Common myeloid progenitor, CD34-positive (primary cell): ENCODE measurements at regions of chr11 and their contacts with region 1.

Region 1: GRCh38 chr11:45771566-45772448 is 33.1 kb upstream of the SLC35C1 start:
- DNase-seq: peak; percentile 74 to 77 (median 75)
- H3K4me3 ChIP-seq: peak overlapping the region; percentile 30 to 86 (median 71)
- H3K27ac ChIP-seq: peak overlapping the region in 1 of 2 experiments; percentile 38
- H3K4me1 ChIP-seq: peaks cover 0 to 11% (median 10%) of the 10 kb centered on the region in 4 experiments
- H3K27me3 ChIP-seq: peaks cover 0 to 26% (median 7%) of the 10 kb centered on the region in 5 experiments

Region 2: DNA sequence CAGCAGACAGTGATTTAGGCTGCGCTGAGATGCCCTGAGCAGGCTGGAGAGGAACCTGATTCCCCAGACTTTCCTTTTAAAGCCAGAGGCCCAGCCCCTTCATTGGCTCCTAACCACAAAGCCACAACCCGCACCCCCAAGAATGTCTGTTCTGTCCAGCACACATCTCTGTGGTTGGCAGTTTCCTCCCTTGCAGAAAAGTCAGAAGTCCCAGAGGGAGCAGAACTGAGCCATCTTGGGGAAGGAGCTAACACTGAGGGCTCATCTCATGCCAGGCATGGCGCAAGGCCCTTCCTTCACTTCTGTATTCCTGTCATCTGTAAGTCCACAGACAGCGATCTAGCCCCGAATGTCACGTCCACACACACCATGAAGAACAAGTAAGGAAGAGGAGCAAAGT is 388.6 kb before region 1 on chr11:
- CTCF ChIA-PET with region 1: interaction called, 12 read pairs
- POLR2A ChIA-PET with region 1: no interaction called
- DNase-seq: peak; percentile 71 to 85 (median 79)
- H3K4me3 ChIP-seq: peak overlapping the region in 2 of 7 experiments; percentile 23 to 37
- H3K27ac ChIP-seq: no peak overlapping the region
- H3K4me1 ChIP-seq: peaks cover 6 to 23% (median 17%) of the 10 kb centered on the region in 4 experiments
- H3K27me3 ChIP-seq: peaks cover 0 to 71% (median 31%) of the 10 kb centered on the region in 5 experiments

Region 3: GRCh38 chr11:45655347-45655756 is 116.5 kb before region 1 on chr11:
- CTCF ChIA-PET with region 1: interaction called, 21 read pairs
- POLR2A ChIA-PET with region 1: no interaction called
- DNase-seq: peak; percentile 53 to 68 (median 62)
- H3K4me3 ChIP-seq: no peak overlapping the region
- H3K27ac ChIP-seq: no peak overlapping the region
- H3K4me1 ChIP-seq: peaks cover 0 to 17% (median 8%) of the 10 kb centered on the region in 4 experiments
- H3K27me3 ChIP-seq: peaks cover 0 to 57% (median 25%) of the 10 kb centered on the region in 5 experiments

Region 4: DNA sequence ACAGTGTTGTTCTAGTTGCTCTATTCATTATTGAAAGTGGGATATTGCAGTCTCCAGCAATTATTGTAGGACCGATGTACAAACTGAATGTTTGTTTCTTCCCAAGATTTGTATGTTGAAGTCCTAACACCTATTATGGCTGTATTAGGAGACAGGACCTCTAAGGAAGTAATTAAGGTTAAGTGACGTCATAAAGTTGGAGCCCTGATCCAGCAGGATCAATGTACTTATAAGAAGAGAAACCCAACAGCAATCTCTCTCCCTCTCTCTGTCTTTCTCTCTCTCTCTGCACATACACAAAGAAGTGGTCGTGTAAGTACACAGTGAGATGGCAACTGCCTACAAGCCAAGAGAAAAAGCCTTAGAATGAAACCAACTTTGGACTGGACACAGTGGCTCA is 17.1 kb after region 1 on chr11:
- CTCF ChIA-PET with region 1: no interaction called
- POLR2A ChIA-PET with region 1: no interaction called
- DNase-seq: no peak
- H3K4me3 ChIP-seq: no peak overlapping the region
- H3K27ac ChIP-seq: no peak overlapping the region
- H3K4me1 ChIP-seq: no peaks in the 10 kb centered on the region
- H3K27me3 ChIP-seq: peaks cover 0 to 4% (median 2%) of the 10 kb centered on the region in 5 experiments

Region 5: GRCh38 chr11:46216019-46216764 is 444.4 kb after region 1 on chr11:
- CTCF ChIA-PET with region 1: no interaction called
- POLR2A ChIA-PET with region 1: no interaction called
- DNase-seq: no peak
- H3K4me3 ChIP-seq: no peak overlapping the region
- H3K27ac ChIP-seq: no peak overlapping the region
- H3K4me1 ChIP-seq: no peaks in the 10 kb centered on the region
- H3K27me3 ChIP-seq: no peaks in the 10 kb centered on the region